ENCODE measurements at regions of chr4 and their contacts with region 1.

Region 1: GRCh38 chr4:76067652-76068286 is 6.7 kb upstream of the ART3 start:
- DNase-seq: peak; percentile 45
- H3K4me3 Mint-ChIP-seq: no peak overlapping the region
- H3K27ac Mint-ChIP-seq: no peak overlapping the region
- H3K4me1 Mint-ChIP-seq: peaks cover 2% of the 10 kb centered on the region
- H3K27me3 Mint-ChIP-seq: no peaks in the 10 kb centered on the region

Region 2: DNA sequence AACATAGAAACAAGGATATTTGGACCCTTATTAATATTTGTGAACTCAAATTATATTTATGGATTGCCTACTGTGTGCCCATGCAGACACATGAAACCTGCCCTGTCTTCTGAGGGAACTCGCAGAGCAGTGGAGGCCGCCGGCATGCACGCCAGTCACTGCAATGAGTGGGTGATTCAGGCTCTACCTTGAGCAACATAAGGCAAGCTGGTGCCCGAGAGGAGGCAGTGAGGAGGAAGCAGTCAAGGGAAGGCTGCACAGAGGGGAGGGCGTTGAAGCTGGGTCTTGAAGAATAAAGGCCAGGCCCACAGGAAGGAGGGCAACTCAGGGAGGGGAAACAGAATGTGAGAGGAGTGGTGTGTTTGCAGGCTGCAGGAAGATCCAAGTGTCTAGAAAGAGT is 218.3 kb before region 1 on chr4:
- intact Hi-C with region 1: no loop called
- DNase-seq: no peak
- H3K4me3 Mint-ChIP-seq: no peak overlapping the region
- H3K27ac Mint-ChIP-seq: no peak overlapping the region
- H3K4me1 Mint-ChIP-seq: peaks cover 10% of the 10 kb centered on the region
- H3K27me3 Mint-ChIP-seq: peaks cover 4% of the 10 kb centered on the region

Region 3: DNA sequence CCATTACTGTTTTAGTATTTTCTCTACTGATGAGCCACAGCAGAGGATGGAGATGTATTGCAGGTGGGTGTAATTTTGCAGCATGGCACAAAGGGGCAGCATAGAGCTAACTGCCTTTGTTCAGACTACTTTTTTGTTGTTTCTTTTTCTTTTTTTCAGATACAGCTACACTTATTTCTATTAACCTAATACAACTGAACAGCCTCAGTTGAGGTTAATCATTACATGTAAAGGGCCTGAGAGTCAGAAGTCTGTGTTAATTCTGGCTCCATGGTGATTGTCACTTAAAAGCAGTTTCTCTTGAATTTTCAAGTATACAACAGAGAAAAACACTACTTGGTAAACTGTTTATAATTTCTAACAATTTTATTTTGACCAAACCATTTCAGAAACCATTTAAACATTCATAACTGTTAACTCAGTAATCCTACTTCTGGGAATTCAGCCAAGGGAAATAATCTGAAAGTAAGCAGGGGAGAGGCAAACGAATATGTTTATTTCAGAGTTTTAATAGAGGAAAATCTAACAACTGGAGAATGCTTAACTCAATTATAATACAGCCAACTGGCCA is 151.6 kb before region 1 on chr4:
- intact Hi-C with region 1: loop called (anchors 10 kb)
- DNase-seq: peak; percentile 18
- H3K4me3 Mint-ChIP-seq: no peak overlapping the region
- H3K27ac Mint-ChIP-seq: no peak overlapping the region
- H3K4me1 Mint-ChIP-seq: peaks cover 1% of the 10 kb centered on the region
- H3K27me3 Mint-ChIP-seq: no peaks in the 10 kb centered on the region